Activated naive CD4-positive, alpha-beta T cell treated with anti-CD3 and anti-CD28 coated beads, Interleukin-2, amount 10 ng/mL, durations not matched to agents 7 days and 5 days (primary cell): ENCODE measurements at regions of chr6 and their contacts with region 1.

Region 1: GRCh38 chr6:105087571-105088211 is 92.1 kb downstream of the POPDC3 start:
- DNase-seq: peak; percentile 35
- H3K4me3 Mint-ChIP-seq: no peak overlapping the region
- H3K27ac Mint-ChIP-seq: no peak overlapping the region
- H3K4me1 Mint-ChIP-seq: no peaks in the 10 kb centered on the region
- H3K27me3 Mint-ChIP-seq: peaks cover 12% of the 10 kb centered on the region

Region 2: GRCh38 chr6:104955927-104956730 is 131.6 kb before region 1 on chr6:
- CTCF ChIA-PET with region 1: no interaction called
- DNase-seq: no peak
- H3K4me3 Mint-ChIP-seq: no peak overlapping the region
- H3K27ac Mint-ChIP-seq: no peak overlapping the region
- H3K4me1 Mint-ChIP-seq: peaks cover 18% of the 10 kb centered on the region
- H3K27me3 Mint-ChIP-seq: peaks cover 68% of the 10 kb centered on the region

Region 3: DNA sequence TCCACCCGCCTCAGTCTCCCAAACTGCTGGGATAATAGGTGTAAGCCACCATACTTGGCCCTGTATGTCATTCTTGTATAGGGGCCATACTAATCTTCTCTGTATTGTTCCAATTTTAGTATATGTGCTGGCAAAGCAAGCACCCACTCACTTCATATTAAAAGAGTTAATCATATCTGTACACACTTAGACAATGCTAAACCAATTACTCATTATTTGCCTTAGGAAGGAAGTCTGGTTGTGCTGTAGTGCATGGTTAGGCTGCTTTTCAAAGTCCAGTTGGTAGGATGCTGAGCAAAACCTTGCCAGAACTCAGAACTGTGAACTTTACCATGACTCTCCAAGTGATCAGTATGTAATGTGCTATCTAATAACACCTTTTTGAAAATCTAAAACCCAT is 42.2 kb before region 1 on chr6:
- CTCF ChIA-PET with region 1: no interaction called
- DNase-seq: no peak
- H3K4me3 Mint-ChIP-seq: no peak overlapping the region
- H3K27ac Mint-ChIP-seq: no peak overlapping the region
- H3K4me1 Mint-ChIP-seq: no peaks in the 10 kb centered on the region
- H3K27me3 Mint-ChIP-seq: peaks cover 3% of the 10 kb centered on the region

Region 4: DNA sequence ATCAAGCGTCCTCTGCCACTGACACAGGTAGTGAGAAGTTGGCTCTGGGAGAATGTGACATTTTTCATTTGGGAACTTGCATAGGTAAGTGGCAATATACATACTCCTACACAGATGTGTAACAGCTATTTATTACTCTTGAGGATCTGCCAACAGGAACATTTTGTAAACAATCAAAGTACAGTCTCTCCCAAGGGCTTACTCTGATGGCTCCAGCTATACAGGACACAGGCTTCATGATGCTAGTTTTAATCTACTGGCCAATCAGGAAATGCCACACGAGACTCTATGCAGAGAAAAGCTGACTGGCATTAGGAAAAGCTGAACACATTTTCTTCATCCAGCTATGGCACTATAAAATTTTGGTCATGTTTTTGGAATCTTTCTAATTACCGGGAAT is 34.3 kb after region 1 on chr6:
- CTCF ChIA-PET with region 1: no interaction called
- DNase-seq: no peak
- H3K4me3 Mint-ChIP-seq: no peak overlapping the region
- H3K27ac Mint-ChIP-seq: no peak overlapping the region
- H3K4me1 Mint-ChIP-seq: no peaks in the 10 kb centered on the region
- H3K27me3 Mint-ChIP-seq: peaks cover 11% of the 10 kb centered on the region

Region 5: DNA sequence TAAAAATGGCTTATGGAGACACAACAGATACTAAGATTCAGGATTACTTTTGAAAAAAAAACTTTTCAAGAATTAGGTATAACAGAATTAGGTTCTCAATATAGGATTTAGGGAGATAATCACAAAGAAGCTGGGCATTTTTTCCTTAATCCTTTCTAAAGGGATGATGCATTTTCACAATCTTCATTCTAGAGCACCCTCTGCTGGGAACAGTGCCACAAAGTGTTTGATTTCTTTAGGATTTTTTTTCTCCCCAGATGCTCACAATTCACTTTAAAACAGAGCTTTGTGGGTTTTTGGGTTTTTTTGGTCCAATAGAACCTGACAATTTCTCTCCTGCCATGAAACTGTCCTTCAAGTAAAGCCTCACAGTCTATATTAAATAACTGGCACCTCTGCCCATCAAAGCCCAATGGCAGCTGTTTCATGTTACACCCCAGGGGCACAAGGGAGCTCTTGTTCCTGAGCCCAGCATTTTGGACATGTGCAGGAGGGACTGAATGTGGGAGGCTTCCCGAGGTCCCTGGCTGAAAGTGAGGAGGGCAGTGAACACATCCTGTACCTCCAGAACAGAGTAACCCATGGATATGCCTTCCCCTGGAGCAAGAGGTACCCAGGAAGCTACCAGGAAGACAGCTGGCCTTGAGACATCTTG is 275.5 kb after region 1 on chr6:
- CTCF ChIA-PET with region 1: interaction called, 11 read pairs
- DNase-seq: no peak
- H3K4me3 Mint-ChIP-seq: no peak overlapping the region
- H3K27ac Mint-ChIP-seq: no peak overlapping the region
- H3K4me1 Mint-ChIP-seq: peaks cover 9% of the 10 kb centered on the region
- H3K27me3 Mint-ChIP-seq: no peaks in the 10 kb centered on the region

Region 6: GRCh38 chr6:105402939-105403935 is 315.5 kb after region 1 on chr6 and contains the start of gene PREP:
- CTCF ChIA-PET with region 1: interaction called, 10 read pairs
- DNase-seq: peak; percentile 86
- H3K4me3 Mint-ChIP-seq: peak within 1 kb of the TSS; percentile 92
- H3K27ac Mint-ChIP-seq: peak within 1 kb of the TSS; percentile 81
- H3K4me1 Mint-ChIP-seq: peaks cover 49% of the 10 kb centered on the region
- H3K27me3 Mint-ChIP-seq: peaks cover 8% of the 10 kb centered on the region

Region 7: GRCh38 chr6:105424175-105424783 is 336.6 kb after region 1 on chr6:
- CTCF ChIA-PET with region 1: interaction called, 21 read pairs
- DNase-seq: peak; percentile 73
- H3K4me3 Mint-ChIP-seq: no peak overlapping the region
- H3K27ac Mint-ChIP-seq: no peak overlapping the region
- H3K4me1 Mint-ChIP-seq: no peaks in the 10 kb centered on the region
- H3K27me3 Mint-ChIP-seq: peaks cover 8% of the 10 kb centered on the region

Region 8: GRCh38 chr6:105484238-105485161 is 396.8 kb after region 1 on chr6:
- CTCF ChIA-PET with region 1: no interaction called
- DNase-seq: no peak
- H3K4me3 Mint-ChIP-seq: no peak overlapping the region
- H3K27ac Mint-ChIP-seq: no peak overlapping the region
- H3K4me1 Mint-ChIP-seq: peaks cover 32% of the 10 kb centered on the region
- H3K27me3 Mint-ChIP-seq: peaks cover 20% of the 10 kb centered on the region